Panc1 (cell line): ENCODE measurements at regions of chr15 and their contacts with region 1.

Region 1: GRCh38 chr15:100111103-100112060 is 230.4 kb downstream of the ADAMTS17 start:
- DNase-seq: no peak
- ATAC-seq: peak; percentile 88
- H3K4me3 ChIP-seq: no peak overlapping the region
- H3K27ac ChIP-seq: no peak overlapping the region
- H3K4me1 ChIP-seq: peaks cover 6% of the 10 kb centered on the region
- H3K27me3 ChIP-seq: no peaks in the 10 kb centered on the region
- CTCF ChIP-seq: no peak

Region 2: GRCh38 chr15:100083572-100083971 is 27.8 kb before region 1 on chr15:
- CTCF ChIA-PET with region 1: no interaction called
- POLR2A ChIA-PET with region 1: no interaction called
- in situ Hi-C with region 1: no loop called
- intact Hi-C with region 1: loop called (anchors 1 kb)
- DNase-seq: no peak
- ATAC-seq: no peak
- H3K4me3 ChIP-seq: no peak overlapping the region
- H3K27ac ChIP-seq: no peak overlapping the region
- H3K4me1 ChIP-seq: no peaks in the 10 kb centered on the region
- H3K27me3 ChIP-seq: no peaks in the 10 kb centered on the region
- CTCF ChIP-seq: no peak